PC-3 (cell line): ENCODE measurements at regions of chr2 and their contacts with region 1.

Region 1: GRCh38 chr2:113390124-113390849 is 47.2 kb upstream of the ZNG1B start:
- DNase-seq: peak; percentile 87
- ATAC-seq: peak; percentile 73
- H3K4me3 ChIP-seq: no peak overlapping the region; the same call in 1 of the 2 replicates
- H3K27ac ChIP-seq: no peak overlapping the region
- H3K4me1 ChIP-seq: no peaks in the 10 kb centered on the region
- H3K27me3 ChIP-seq: no peaks in the 10 kb centered on the region
- CTCF ChIP-seq: peak; percentile 92

Region 2: GRCh38 chr2:113203901-113204519 is 186.3 kb before region 1 on chr2:
- CTCF ChIA-PET with region 1: interaction called, 5 read pairs
- POLR2A ChIA-PET with region 1: no interaction called
- intact Hi-C with region 1: loop called (anchors 2 kb)
- DNase-seq: peak; percentile 89
- ATAC-seq: peak; percentile 67
- H3K4me3 ChIP-seq: no peak overlapping the region
- H3K27ac ChIP-seq: 0 out of 2 replicates have a peak overlapping the region, but pooled peaks have one; percentile 5
- H3K4me1 ChIP-seq: peaks cover 18% of the 10 kb centered on the region
- H3K27me3 ChIP-seq: no peaks in the 10 kb centered on the region
- CTCF ChIP-seq: peak; percentile 92